Activated T-helper 1 cell treated with anti-CD3 and anti-CD28 coated beads, Interleukin-12 subunit alpha, Interleukin-12 subunit beta, Interleukin-2, Interleukin-4 antibody, amounts not matched to agents 30 ng/mL and 10 ng/mL and 1 ng/mL, durations not matched to agents 14 hours and 24 hours and 36 hours (primary cell): ENCODE measurements at regions of chr1 and their contacts with region 1.

Region 1: DNA sequence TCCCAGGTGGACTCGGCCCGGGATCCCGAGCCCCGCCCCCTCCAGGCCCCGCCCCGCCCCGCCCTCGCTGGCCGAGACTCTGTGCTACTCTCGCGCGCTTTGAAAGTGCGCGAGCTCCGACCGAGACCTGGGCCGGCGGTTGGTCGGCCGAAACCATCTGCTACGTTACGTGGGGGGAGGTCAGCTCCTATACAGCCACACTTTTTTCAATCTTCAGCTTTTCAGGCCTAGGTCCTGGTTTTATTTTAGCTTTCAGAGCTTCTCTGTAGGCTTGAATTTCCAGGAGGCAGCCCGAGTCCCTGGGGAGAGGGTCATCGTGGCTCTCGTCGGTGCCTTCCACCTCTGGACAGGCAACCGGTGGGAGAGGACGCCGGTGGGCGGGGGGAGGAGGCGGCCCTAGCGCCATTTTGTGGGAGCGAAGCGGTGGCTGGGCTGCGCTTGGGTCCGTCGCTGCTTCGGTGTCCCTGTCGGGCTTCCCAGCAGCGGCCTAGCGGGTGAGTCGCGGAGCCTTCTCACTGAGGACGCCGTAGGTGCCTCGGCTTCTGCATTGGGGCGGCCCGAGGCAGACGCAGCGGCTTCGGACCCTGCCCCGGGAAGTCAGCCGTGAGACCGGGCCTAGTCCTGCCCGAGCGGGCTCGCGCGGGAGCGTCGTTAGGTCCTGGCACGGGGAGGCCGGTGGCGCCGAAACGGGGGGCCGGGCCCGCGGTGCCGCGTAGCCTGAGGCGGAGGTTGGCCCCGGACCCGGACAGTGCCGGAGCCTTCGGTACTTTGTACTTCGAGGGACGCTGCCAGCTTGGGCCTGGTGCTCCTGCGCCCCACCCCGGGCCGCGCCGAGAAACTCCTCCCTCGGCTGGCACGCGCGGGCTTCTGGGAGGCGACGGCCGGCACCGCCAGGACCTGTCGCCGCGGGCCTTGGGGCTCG is at the start of gene TARDBP:
- DNase-seq: peak; percentile 88
- H3K4me3 Mint-ChIP-seq: peak within 1 kb of the TSS; percentile 94
- H3K27ac Mint-ChIP-seq: peak within 1 kb of the TSS; percentile 98
- H3K4me1 Mint-ChIP-seq: peaks cover 18% of the 10 kb centered on the region
- H3K27me3 Mint-ChIP-seq: no peaks in the 10 kb centered on the region
- total RNA-seq, gene TARDBP: 197 TPM in 2 replicates

Region 2: DNA sequence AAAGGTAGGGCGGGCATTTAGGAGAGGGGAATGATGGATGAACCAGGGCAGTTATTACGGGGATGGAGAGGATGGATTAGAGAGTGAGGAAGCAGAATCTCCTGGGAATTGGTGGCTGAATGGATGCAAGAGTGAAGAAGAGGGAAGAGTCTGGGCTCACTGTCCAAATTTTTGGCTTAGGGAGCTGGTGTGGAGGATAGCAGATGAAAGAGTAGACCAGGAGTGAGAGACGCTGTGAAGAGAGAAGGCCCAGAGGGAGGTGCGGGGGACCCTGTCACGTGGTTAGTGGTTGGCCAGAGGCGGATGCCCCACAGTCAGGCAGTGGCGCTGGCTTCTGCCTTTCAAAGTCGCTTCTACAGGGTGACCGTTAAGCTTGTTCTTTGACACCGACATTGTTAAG is 459.4 kb before region 1 on chr1:
- intact Hi-C with region 1: no loop called
- DNase-seq: no peak
- H3K4me3 Mint-ChIP-seq: no peak overlapping the region
- H3K27ac Mint-ChIP-seq: no peak overlapping the region
- H3K4me1 Mint-ChIP-seq: peaks cover 7% of the 10 kb centered on the region
- H3K27me3 Mint-ChIP-seq: no peaks in the 10 kb centered on the region

Region 3: GRCh38 chr1:10877894-10878293 is 134.6 kb before region 1 on chr1:
- intact Hi-C with region 1: no loop called
- DNase-seq: no peak
- H3K4me3 Mint-ChIP-seq: no peak overlapping the region
- H3K27ac Mint-ChIP-seq: no peak overlapping the region
- H3K4me1 Mint-ChIP-seq: no peaks in the 10 kb centered on the region
- H3K27me3 Mint-ChIP-seq: peaks cover 9% of the 10 kb centered on the region

Region 4: GRCh38 chr1:11099310-11100149 is 87.0 kb after region 1 on chr1 and contains the start of gene EXOSC10:
- intact Hi-C with region 1: loop called (anchors 1 kb)
- DNase-seq: peak; percentile 96
- H3K4me3 Mint-ChIP-seq: peak within 1 kb of the TSS; percentile 96
- H3K27ac Mint-ChIP-seq: peak within 1 kb of the TSS; percentile 96
- H3K4me1 Mint-ChIP-seq: peaks cover 13% of the 10 kb centered on the region
- H3K27me3 Mint-ChIP-seq: no peaks in the 10 kb centered on the region
- total RNA-seq, gene EXOSC10: 93.5 and 103 TPM in 2 replicates

Region 5: GRCh38 chr1:11272832-11273594 is 260.5 kb after region 1 on chr1 and contains the start of gene UBIAD1:
- intact Hi-C with region 1: loop called (anchors 1 kb)
- DNase-seq: peak; percentile 75
- H3K4me3 Mint-ChIP-seq: peak within 1 kb of the TSS; percentile 98
- H3K27ac Mint-ChIP-seq: peak within 1 kb of the TSS; percentile 95
- H3K4me1 Mint-ChIP-seq: peaks cover 25% of the 10 kb centered on the region
- H3K27me3 Mint-ChIP-seq: peaks cover 2% of the 10 kb centered on the region
- total RNA-seq, gene UBIAD1: 30.5 and 33.1 TPM in 2 replicates